CD14-positive monocyte (primary cell): ENCODE measurements at regions of chr6 and their contacts with region 1.

Region 1: GRCh38 chr6:63685446-63686379 is 50.1 kb downstream of the PHF3 start:
- DNase-seq: peak; percentile 59 to 78 (median 64)
- H3K4me3 ChIP-seq: peak overlapping the region in 2 of 3 experiments; percentile 36 to 46
- H3K4me3 Mint-ChIP-seq: peak overlapping the region; percentile 48 to 77
- H3K27ac ChIP-seq: peak overlapping the region in 1 of 2 donors; percentile 72
- H3K27ac Mint-ChIP-seq: peak overlapping the region; percentile 80 to 88 (median 85)
- H3K4me1 ChIP-seq: peaks cover 38 to 61% of the 10 kb centered on the region in 2 donors
- H3K4me1 Mint-ChIP-seq: peaks cover 63% of the 10 kb centered on the region
- H3K27me3 ChIP-seq: no peaks in the 10 kb centered on the region
- H3K27me3 Mint-ChIP-seq: no peaks in the 10 kb centered on the region
- CTCF ChIP-seq: no peak

Region 2: GRCh38 chr6:63635588-63636517 is 49.9 kb before region 1 on chr6 and contains the start of gene PHF3:
- intact Hi-C with region 1: loop called in 1 of 2 experiments (anchors 10 kb)
- DNase-seq: peak; percentile 79 to 87 (median 83)
- H3K4me3 ChIP-seq: peak within 1 kb of the TSS; percentile 85 to 96 (median 90)
- H3K4me3 Mint-ChIP-seq: peak within 1 kb of the TSS; percentile 97 to 98
- H3K27ac ChIP-seq: peak within 1 kb of the TSS; percentile 96 to 97
- H3K27ac Mint-ChIP-seq: peak within 1 kb of the TSS; percentile 91 to 98 (median 95)
- H3K4me1 ChIP-seq: peaks cover 25 to 56% of the 10 kb centered on the region in 2 donors
- H3K4me1 Mint-ChIP-seq: peaks cover 54% of the 10 kb centered on the region
- H3K27me3 ChIP-seq: no peaks in the 10 kb centered on the region
- H3K27me3 Mint-ChIP-seq: peaks cover 0 to 2% (median 0%) of the 10 kb centered on the region in 3 donors
- CTCF ChIP-seq: no peak
- polyA plus RNA-seq, gene PHF3: 5.4 to 13.8 (median 13.0) TPM